GM13976 (cell line): ENCODE measurements at regions of chr6 and their contacts with region 1.

Region 1: DNA sequence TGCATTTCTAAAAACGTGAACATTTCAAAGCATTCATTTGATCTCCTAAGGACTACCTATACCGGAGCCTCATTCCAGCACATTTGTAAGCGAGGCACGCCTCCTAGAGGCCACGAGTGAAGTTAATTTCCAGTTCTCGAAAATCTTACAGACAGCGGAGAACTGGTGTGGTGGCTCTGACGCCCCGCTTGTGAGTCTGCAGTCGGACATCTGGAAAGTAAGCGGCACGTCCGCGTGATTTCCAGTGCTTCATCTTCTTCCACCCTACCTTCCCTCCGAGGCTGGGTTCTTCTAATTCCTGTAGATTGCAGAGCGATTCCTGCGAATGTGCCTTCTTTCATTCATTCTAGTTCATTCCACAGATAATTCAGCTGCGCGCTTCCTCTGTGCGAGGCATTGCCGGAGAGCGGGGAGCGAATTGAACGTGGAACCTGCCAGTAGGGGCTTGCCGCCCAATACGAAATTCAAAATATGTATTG is 810 bp upstream of the PRIM2 start:
- DNase-seq: peak; percentile 81
- CTCF ChIP-seq: peak; percentile 82

Region 2: GRCh38 chr6:56637640-56638039 is 679.0 kb before region 1 on chr6:
- in situ Hi-C with region 1: loop called (anchors 25 kb)
- DNase-seq: peak; percentile 29
- CTCF ChIP-seq: peak; percentile 28

Region 3: DNA sequence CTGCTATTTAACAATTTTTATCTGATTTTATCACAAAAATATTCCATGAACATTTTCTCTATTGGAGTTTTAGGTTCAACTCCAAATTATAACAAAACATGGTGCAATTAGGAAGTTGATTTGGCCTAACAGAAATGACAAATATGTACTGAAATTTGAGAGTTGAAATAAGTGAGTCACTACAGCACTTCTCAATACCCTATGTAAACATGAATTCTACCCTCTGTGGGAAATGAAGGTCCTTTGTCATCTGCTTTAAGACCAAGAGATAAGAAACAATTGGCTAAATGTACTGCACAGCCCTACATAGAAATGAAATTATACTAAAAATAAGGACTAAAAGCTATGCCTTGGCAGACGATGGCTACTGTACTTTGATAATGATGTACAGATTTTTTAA is 447.9 kb before region 1 on chr6:
- in situ Hi-C with region 1: no loop called
- DNase-seq: no peak
- CTCF ChIP-seq: no peak

Region 4: GRCh38 chr6:56902641-56903464 is 413.8 kb before region 1 on chr6:
- in situ Hi-C with region 1: loop called (anchors 5 kb)
- DNase-seq: peak; percentile 40
- CTCF ChIP-seq: peak; percentile 58

Region 5: DNA sequence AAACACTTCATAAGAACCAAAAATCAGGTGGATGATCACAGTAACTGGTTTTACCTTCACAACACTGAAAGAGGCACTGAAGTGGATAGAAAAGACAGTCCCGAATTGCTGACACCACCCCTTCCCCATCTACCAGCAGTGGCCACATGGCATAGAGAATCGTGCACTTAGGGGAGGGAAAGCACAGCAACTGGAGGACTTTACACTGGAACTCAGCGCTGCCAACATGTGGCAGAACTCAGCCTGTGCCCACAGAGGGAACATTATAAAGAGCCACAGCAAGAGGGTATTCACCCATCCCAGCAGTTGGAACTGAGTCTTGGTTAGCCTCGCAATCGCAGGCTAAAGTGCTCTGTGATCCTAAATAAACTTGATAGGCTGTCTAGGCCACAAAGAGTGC is 276.6 kb before region 1 on chr6:
- in situ Hi-C with region 1: loop called (anchors 25 kb)
- DNase-seq: no peak
- CTCF ChIP-seq: no peak

Region 6: DNA sequence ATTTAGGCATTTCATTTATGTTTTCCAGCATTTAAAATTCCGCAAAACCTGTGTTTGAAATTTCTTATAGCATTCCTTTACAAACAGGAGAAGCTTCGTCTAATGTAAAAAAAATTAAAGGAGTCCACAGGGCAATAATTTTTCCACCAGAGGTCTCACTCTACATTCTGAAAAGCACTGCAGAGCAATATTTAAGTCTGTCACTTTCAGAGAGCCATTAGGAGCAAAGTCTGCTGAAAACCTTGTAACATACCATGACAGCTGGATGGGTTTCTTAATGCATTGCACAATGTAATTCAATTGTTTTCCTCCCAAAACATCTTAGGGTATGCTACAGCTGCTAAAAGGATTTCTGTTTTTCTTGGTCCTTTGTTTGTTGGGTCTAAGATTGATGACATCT is 126.5 kb before region 1 on chr6:
- in situ Hi-C with region 1: loop called (anchors 25 kb)
- DNase-seq: no peak
- CTCF ChIP-seq: peak; percentile 8